Natural killer cell (primary cell): ENCODE measurements at regions of chr3 and their contacts with region 1.

Region 1: DNA sequence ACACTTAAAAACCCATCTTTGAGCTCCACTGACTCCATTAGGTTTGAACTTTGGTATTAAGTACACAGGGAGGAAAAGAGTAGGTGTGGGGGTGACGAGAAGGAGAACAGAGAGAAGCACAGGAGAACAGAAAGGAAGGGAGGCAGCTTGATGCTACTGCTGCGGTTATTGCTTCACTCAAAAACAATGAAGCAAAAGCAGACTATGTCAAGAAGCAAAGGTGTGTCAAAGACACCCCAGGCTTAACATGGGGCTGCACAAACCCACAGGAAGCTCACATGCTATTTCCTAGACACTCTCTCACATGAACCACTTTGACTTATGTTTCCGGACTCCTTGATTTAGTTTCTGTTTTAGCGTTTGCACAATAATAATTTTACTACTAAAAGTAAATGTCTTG is 961.0 kb upstream of the CFAP20DC start:
- DNase-seq: peak; percentile 44 to 91
- ATAC-seq: peak; percentile 91 to 99 (median 94)
- H3K4me3 ChIP-seq: peak overlapping the region; percentile 21
- H3K4me3 Mint-ChIP-seq: peak overlapping the region; percentile 96
- H3K27ac ChIP-seq: peak overlapping the region; percentile 90
- H3K27ac Mint-ChIP-seq: peak overlapping the region; percentile 98 to 99
- H3K4me1 ChIP-seq: peaks cover 21% of the 10 kb centered on the region
- H3K4me1 Mint-ChIP-seq: peaks cover 61 to 74% of the 10 kb centered on the region in 2 donors
- H3K27me3 ChIP-seq: no peaks in the 10 kb centered on the region
- H3K27me3 Mint-ChIP-seq: no peaks in the 10 kb centered on the region
- CTCF ChIP-seq: no peak

Region 2: GRCh38 chr3:59809710-59810444 is 200.9 kb before region 1 on chr3:
- intact Hi-C with region 1: no loop called
- DNase-seq: peak in 1 of 2 donors; percentile 33
- ATAC-seq: peak in 1 of 3 donors; percentile 26
- H3K4me3 ChIP-seq: no peak overlapping the region
- H3K4me3 Mint-ChIP-seq: no peak overlapping the region
- H3K27ac ChIP-seq: no peak overlapping the region
- H3K27ac Mint-ChIP-seq: no peak overlapping the region
- H3K4me1 ChIP-seq: peaks cover 3% of the 10 kb centered on the region
- H3K4me1 Mint-ChIP-seq: peaks cover 0 to 7% of the 10 kb centered on the region in 2 donors
- H3K27me3 ChIP-seq: no peaks in the 10 kb centered on the region
- H3K27me3 Mint-ChIP-seq: peaks cover 0 to 2% of the 10 kb centered on the region in 2 donors
- CTCF ChIP-seq: peak; percentile 24

Region 3: DNA sequence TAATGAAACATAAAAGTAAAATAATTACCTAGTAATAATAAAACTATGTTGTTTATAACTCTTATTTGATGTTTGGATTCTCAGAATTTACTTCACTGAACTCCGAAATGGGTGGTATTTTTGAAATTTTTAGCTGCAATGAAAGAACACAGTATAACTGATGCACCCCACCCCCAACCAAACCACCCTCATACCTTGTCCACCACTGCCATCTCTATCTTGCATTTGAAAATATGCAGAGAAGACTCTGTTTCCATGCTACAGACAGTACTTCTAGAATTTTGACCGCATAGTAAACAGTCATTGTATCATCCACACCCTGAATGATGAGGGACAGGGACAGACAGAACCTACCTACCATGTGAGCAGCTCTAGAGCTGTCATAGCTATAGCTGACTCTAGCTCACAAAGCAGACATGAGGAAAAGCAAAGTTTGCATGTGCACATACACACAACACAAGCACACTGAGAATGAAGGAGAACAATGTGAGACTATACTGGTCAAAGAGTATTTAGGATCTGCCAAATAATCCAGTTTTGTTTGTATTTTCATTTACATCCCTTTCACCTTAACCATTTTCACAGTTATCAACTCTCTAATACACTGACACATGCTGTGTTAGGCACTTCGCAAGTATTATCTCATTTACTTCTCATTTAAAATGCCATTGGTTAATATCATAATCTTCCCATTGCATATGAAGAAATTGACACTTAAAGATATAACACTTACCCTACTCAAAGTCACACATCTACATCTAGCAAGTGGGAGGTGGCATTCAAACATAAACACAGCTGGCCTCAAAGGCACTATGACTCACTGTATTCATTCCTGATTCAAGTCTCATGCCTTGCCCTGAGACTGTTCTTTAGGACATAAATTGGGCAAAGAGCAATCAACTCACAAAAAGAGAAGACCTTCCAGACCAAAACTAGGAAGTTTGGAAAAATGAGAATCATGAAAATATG is 53.7 kb after region 1 on chr3:
- intact Hi-C with region 1: loop called (anchors 1 kb)
- DNase-seq: peak in 1 of 2 donors; percentile 39
- ATAC-seq: peak; percentile 85 to 91 (median 88)
- H3K4me3 ChIP-seq: no peak overlapping the region
- H3K4me3 Mint-ChIP-seq: peak overlapping the region; percentile 60
- H3K27ac ChIP-seq: peak overlapping the region; percentile 24
- H3K27ac Mint-ChIP-seq: peak overlapping the region; percentile 73 to 91
- H3K4me1 ChIP-seq: peaks cover 10% of the 10 kb centered on the region
- H3K4me1 Mint-ChIP-seq: peaks cover 35 to 39% of the 10 kb centered on the region in 2 donors
- H3K27me3 ChIP-seq: no peaks in the 10 kb centered on the region
- H3K27me3 Mint-ChIP-seq: no peaks in the 10 kb centered on the region
- CTCF ChIP-seq: no peak

Region 4: DNA sequence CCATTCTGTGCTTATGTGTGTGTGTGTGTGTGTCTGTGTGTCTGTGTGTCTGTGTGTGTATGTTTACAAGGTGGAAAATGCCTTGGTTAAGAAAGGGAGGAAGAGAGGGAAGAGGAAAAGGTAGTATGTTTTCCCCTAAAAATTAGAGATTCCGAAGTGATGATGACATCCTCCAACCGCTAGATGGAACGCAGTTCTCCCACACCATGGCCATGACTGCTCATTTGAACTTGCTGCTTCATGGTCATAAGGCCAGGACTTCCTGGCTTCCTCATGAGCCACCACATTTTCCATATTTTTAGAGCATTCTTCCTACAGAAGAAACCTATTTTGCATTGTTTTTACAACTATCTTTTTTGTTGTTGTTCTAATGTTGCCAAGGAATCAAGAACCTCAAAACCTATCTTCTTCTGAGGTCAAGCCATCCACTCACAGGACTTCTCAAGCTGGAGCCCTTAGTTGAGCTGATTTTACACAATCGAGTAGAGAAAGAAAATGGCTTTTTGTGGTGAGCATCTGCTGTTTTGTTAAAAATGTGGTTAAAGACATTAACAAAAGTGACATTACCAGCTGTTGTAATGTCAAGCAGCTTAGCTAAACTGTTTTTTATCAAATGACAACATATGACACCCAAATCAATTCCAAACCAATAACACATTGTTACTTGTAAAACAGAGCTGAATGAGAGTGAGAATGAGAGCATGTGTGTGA is 149.5 kb after region 1 on chr3:
- intact Hi-C with region 1: loop called (anchors 10 kb)
- DNase-seq: no peak
- ATAC-seq: peak in 2 of 3 donors; percentile 69 to 84
- H3K4me3 ChIP-seq: no peak overlapping the region
- H3K4me3 Mint-ChIP-seq: peak overlapping the region; percentile 32
- H3K27ac ChIP-seq: no peak overlapping the region
- H3K27ac Mint-ChIP-seq: peak overlapping the region; percentile 48 to 58
- H3K4me1 ChIP-seq: peaks cover 4% of the 10 kb centered on the region
- H3K4me1 Mint-ChIP-seq: peaks cover 38 to 44% of the 10 kb centered on the region in 2 donors
- H3K27me3 ChIP-seq: no peaks in the 10 kb centered on the region
- H3K27me3 Mint-ChIP-seq: no peaks in the 10 kb centered on the region
- CTCF ChIP-seq: no peak